Activated CD8-positive, alpha-beta T cell treated with anti-CD3 and anti-CD28 coated beads, Interleukin-2, amount 10 ng/mL, durations not matched to agents 7 days and 5 days (primary cell): ENCODE measurements at regions of chr2 and their contacts with region 1.

Region 1: GRCh38 chr2:237474931-237475703 is 11.9 kb upstream of the MLPH start:
- DNase-seq: peak; percentile 78
- ATAC-seq: peak; percentile 95
- H3K4me3 Mint-ChIP-seq: peak overlapping the region; percentile 78
- H3K27ac Mint-ChIP-seq: peak overlapping the region; percentile 78
- H3K4me1 Mint-ChIP-seq: peaks cover 14% of the 10 kb centered on the region
- H3K27me3 Mint-ChIP-seq: peaks cover 23% of the 10 kb centered on the region

Region 2: GRCh38 chr2:237154082-237154638 is 321.0 kb before region 1 on chr2:
- CTCF ChIA-PET with region 1: interaction called, 19 read pairs
- POLR2A ChIA-PET with region 1: no interaction called
- DNase-seq: peak; percentile 74
- ATAC-seq: peak; percentile 59
- H3K4me3 Mint-ChIP-seq: no peak overlapping the region
- H3K27ac Mint-ChIP-seq: no peak overlapping the region
- H3K4me1 Mint-ChIP-seq: peaks cover 35% of the 10 kb centered on the region
- H3K27me3 Mint-ChIP-seq: no peaks in the 10 kb centered on the region

Region 3: DNA sequence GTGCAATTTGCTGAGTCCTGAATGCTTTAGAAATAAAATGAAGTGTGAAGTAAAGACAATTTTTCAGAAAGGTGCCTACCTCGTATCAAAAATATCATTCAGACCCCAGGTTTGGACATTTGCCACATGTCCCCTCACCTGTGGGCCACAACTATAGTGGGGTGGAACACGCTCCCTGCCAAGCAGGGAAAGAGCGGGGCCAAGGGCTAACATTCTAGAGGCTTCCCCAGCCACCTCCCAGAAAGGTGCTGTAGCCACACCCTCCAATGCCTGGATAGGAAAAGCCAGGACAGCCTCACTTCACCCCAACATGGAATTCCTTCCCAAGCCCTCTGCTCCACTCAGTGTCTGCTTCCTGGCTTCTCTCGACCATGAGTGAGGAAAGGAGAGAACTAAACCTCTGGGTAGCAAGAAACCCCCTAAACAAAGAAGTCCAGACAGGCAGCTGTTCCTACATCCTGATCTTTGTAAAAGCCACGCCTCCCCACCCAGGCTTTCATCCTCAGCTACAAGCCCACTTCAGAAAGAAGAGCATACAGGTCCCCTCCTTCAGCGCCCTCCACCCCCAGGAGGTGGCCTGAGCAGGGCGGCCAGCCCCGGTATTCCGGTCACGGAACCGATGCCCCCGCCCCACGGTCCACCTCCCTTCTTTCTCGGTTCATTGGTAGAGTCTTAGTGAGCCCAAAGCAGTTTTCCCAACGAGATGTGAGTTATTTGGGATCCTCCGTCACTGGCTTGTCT is 63.3 kb before region 1 on chr2:
- CTCF ChIA-PET with region 1: interaction called, 14 read pairs
- POLR2A ChIA-PET with region 1: no interaction called
- DNase-seq: no peak
- ATAC-seq: no peak
- H3K4me3 Mint-ChIP-seq: no peak overlapping the region
- H3K27ac Mint-ChIP-seq: no peak overlapping the region
- H3K4me1 Mint-ChIP-seq: no peaks in the 10 kb centered on the region
- H3K27me3 Mint-ChIP-seq: no peaks in the 10 kb centered on the region

Region 4: GRCh38 chr2:237427769-237428506 is 47.2 kb before region 1 on chr2:
- CTCF ChIA-PET with region 1: interaction called, 121 read pairs
- POLR2A ChIA-PET with region 1: no interaction called
- DNase-seq: peak; percentile 59
- ATAC-seq: peak; percentile 50
- H3K4me3 Mint-ChIP-seq: no peak overlapping the region
- H3K27ac Mint-ChIP-seq: peak overlapping the region; percentile 51
- H3K4me1 Mint-ChIP-seq: peaks cover 54% of the 10 kb centered on the region
- H3K27me3 Mint-ChIP-seq: peaks cover 14% of the 10 kb centered on the region

Region 5: DNA sequence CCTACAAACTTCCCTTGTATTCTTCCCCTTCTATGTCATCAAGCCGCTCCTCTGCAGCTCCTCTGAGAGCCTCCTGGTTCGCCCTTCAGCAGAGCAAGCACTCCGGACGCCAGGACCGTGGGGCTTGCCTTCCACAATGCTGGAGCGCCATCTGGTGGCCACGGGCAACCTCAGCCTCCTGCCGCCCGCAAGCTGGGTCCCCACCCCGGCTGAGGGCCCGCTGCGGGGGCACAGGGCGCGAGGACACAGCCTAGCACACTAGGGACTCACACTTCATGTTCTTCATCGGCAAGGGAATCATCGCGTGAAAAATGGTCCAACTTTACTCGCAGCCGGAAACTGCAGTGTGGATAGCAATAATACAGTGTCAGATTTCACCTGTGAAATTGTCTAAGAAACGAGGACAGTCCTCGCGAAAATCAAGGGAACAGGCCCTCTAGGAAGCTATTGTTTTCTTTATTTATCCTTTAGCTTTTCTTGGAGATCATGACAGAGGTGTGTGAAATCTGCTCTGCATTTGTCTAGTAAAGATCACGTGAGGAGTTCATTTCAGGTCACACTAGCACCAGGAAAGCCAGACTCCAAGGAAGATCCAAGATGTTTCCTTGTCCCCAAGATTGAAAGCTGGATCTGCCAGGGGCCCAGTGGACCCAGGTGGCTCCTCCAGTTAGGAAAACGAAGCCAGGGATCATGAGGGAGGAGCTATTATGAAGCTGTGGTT is 97.1 kb after region 1 on chr2:
- CTCF ChIA-PET with region 1: interaction called, 12 read pairs
- POLR2A ChIA-PET with region 1: no interaction called
- DNase-seq: peak; percentile 89
- ATAC-seq: peak; percentile 98
- H3K4me3 Mint-ChIP-seq: no peak overlapping the region
- H3K27ac Mint-ChIP-seq: no peak overlapping the region
- H3K4me1 Mint-ChIP-seq: peaks cover 5% of the 10 kb centered on the region
- H3K27me3 Mint-ChIP-seq: no peaks in the 10 kb centered on the region

Region 6: GRCh38 chr2:237627441-237628246 is 152.5 kb after region 1 on chr2 and contains the start of gene LRRFIP1:
- CTCF ChIA-PET with region 1: no interaction called
- POLR2A ChIA-PET with region 1: no interaction called
- DNase-seq: no peak
- ATAC-seq: peak; percentile 58
- H3K4me3 Mint-ChIP-seq: peak within 1 kb of the TSS; percentile 65
- H3K27ac Mint-ChIP-seq: no peak within 1 kb of the TSS
- H3K4me1 Mint-ChIP-seq: peaks cover 10% of the 10 kb centered on the region
- H3K27me3 Mint-ChIP-seq: peaks cover 59% of the 10 kb centered on the region
- total RNA-seq, gene LRRFIP1: 189 to 207 TPM